Calu3 (cell line): ENCODE measurements at regions of chr15 and their contacts with region 1.

Region 1: DNA sequence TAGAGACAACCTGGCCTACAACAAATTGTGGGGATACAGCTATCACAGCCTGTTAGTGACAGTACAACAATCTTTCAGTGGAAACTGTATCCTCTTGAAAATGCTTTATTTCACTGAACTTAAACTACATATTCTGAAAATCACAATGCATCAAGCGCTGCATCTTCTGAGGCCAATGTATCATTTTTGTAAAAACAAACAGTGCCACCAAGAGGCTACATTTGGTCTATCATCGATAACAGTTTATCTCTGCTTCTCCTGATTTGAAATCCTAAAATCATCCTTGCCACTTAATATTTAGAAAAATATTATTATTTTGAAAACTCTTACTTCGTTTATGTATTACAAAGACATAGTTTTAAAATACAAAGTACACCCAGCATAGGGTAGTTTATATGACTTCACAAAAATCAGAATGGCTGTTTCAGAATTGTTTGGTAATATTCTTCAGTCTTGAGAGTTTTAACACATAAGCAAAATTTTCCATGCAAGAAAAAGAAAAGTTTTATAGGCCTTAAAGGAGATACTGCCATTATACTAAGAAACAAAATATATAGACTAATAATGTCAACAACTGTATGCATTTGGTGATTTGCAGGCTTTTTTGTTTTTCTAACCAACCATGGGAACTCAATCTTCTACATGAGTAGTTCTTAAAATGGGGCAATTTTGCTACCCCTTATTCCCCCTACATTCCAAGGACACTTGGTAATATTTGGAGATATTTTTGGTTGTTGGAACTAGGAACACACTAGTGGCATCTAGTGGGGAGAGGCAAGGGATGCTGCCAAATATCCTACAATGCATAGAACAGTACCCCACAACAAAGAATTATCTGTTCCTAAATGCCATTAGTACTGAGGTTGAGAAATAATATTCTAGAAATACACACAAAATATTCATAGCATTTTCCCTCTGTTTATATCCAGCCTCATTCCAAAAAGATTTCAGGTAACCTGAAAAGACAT is 42.3 kb downstream of the WDR72 start:
- DNase-seq: no peak
- H3K4me3 Mint-ChIP-seq: no peak overlapping the region
- H3K27ac Mint-ChIP-seq: no peak overlapping the region
- H3K4me1 Mint-ChIP-seq: no peaks in the 10 kb centered on the region
- H3K27me3 Mint-ChIP-seq: no peaks in the 10 kb centered on the region
- CTCF ChIP-seq: peak; percentile 19

Region 2: GRCh38 chr15:52765785-52766184 is 951.4 kb before region 1 on chr15:
- CTCF ChIA-PET with region 1: no interaction called
- intact Hi-C with region 1: loop called (anchors 5 kb)
- DNase-seq: peak; percentile 35
- H3K4me3 Mint-ChIP-seq: no peak overlapping the region
- H3K27ac Mint-ChIP-seq: no peak overlapping the region
- H3K4me1 Mint-ChIP-seq: peaks cover 12% of the 10 kb centered on the region
- H3K27me3 Mint-ChIP-seq: peaks cover 32% of the 10 kb centered on the region
- CTCF ChIP-seq: no peak

Region 3: GRCh38 chr15:53197426-53197839 is 519.8 kb before region 1 on chr15:
- CTCF ChIA-PET with region 1: no interaction called
- intact Hi-C with region 1: loop called (anchors 5 kb)
- DNase-seq: peak; percentile 78
- H3K4me3 Mint-ChIP-seq: peak overlapping the region; percentile 40
- H3K27ac Mint-ChIP-seq: no peak overlapping the region
- H3K4me1 Mint-ChIP-seq: no peaks in the 10 kb centered on the region
- H3K27me3 Mint-ChIP-seq: no peaks in the 10 kb centered on the region
- CTCF ChIP-seq: peak; percentile 90

Region 4: DNA sequence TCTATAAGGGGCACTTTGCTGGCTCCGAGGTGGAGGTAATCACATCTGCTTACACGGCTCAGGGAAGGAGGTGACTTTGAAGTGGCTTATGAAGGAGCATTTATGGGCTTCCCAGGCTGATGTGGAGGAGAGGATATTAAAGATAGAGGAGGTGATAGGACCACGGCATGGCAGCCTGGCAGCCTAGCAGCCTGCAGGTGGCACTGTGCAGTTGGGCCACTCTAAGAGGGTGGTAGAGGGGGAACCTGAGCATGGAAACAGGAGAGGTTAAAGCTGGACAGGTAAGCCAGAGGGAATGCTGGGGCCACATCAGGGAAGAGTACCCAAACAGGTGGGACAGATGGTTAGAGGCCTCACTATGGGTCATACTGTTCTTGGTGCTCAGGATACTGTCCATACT is 332.8 kb before region 1 on chr15:
- CTCF ChIA-PET with region 1: no interaction called
- intact Hi-C with region 1: loop called (anchors 1 kb)
- DNase-seq: peak; percentile 47
- H3K4me3 Mint-ChIP-seq: no peak overlapping the region
- H3K27ac Mint-ChIP-seq: peak overlapping the region; percentile 13
- H3K4me1 Mint-ChIP-seq: peaks cover 10% of the 10 kb centered on the region
- H3K27me3 Mint-ChIP-seq: no peaks in the 10 kb centered on the region
- CTCF ChIP-seq: peak; percentile 43

Region 5: GRCh38 chr15:53522991-53523390 is 194.2 kb before region 1 on chr15:
- CTCF ChIA-PET with region 1: no interaction called
- intact Hi-C with region 1: loop called (anchors 5 kb)
- DNase-seq: no peak
- H3K4me3 Mint-ChIP-seq: no peak overlapping the region
- H3K27ac Mint-ChIP-seq: no peak overlapping the region
- H3K4me1 Mint-ChIP-seq: peaks cover 9% of the 10 kb centered on the region
- H3K27me3 Mint-ChIP-seq: no peaks in the 10 kb centered on the region
- CTCF ChIP-seq: no peak

Region 6: DNA sequence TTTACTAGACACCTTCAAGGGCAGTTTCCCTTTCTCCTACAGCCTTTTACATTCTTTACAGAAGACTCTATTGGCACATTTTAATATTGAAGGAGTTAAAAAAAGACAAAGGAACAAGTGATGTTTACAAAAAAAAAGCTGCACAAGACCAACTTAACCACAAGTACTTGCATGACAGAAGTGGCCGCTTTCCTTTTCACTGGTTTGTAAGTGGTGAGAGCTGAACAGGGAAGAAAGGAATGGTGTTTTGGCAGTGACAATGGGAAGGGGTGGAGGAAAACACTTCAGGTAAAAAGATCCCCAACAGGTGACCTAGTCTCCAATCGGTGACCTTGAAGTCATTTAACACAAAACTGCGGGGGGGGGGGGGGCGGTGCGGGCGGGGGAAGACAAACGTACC is 41.2 kb after region 1 on chr15:
- CTCF ChIA-PET with region 1: no interaction called
- intact Hi-C with region 1: no loop called
- DNase-seq: no peak
- H3K4me3 Mint-ChIP-seq: no peak overlapping the region
- H3K27ac Mint-ChIP-seq: no peak overlapping the region
- H3K4me1 Mint-ChIP-seq: no peaks in the 10 kb centered on the region
- H3K27me3 Mint-ChIP-seq: no peaks in the 10 kb centered on the region
- CTCF ChIP-seq: no peak